Tibial artery (tissue), 4 donors: ENCODE measurements at regions of chr10 and their contacts with region 1.

Region 1: DNA sequence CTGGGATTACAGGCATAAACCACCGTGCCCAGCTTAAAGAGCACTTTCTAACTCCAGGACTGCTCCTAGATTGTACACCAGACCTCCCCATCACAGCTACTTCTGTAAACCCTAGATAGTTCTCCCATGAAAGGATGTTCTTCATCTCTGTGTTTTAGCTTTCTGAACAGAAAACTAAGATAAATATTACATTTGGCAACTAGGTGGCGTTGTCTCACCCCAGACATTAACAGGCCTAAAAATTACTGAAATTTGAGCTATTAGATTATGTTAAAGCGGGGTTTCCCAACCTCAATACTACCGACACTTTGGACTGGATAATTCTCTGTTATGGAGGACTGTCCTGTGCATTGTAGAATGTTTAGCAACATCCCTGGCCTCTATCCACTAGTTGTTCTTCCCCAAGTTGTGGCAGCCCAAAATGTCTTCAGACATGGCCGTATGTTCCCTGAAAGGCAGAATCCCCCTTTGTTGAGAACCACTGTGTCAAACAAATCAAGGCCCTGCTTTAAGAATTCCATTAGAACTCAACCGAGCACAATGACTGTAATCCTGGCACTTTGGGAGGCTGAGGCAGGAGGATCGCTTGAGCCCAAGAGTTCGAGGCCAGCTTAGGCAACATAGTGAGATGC is 19.1 kb downstream of the ATOH7 start:
- DNase-seq: no peak
- H3K4me3 ChIP-seq: no peak overlapping the region
- H3K27ac ChIP-seq: no peak overlapping the region
- H3K4me1 ChIP-seq: no peaks in the 10 kb centered on the region
- H3K27me3 ChIP-seq: peaks cover 0 to 4% of the 10 kb centered on the region in 2 donors
- CTCF ChIP-seq: peak; percentile 52 to 53

Region 2: GRCh38 chr10:68301790-68302502 is 89.1 kb after region 1 on chr10:
- intact Hi-C with region 1: loop called (anchors 10 kb)
- DNase-seq: no peak
- H3K4me3 ChIP-seq: no peak overlapping the region
- H3K27ac ChIP-seq: no peak overlapping the region
- H3K4me1 ChIP-seq: no peaks in the 10 kb centered on the region
- H3K27me3 ChIP-seq: no peaks in the 10 kb centered on the region
- CTCF ChIP-seq: peak; percentile 27 to 44

Region 3: GRCh38 chr10:68315582-68315981 is 102.7 kb after region 1 on chr10:
- intact Hi-C with region 1: no loop called
- DNase-seq: no peak
- H3K4me3 ChIP-seq: no peak overlapping the region
- H3K27ac ChIP-seq: no peak overlapping the region
- H3K4me1 ChIP-seq: no peaks in the 10 kb centered on the region
- H3K27me3 ChIP-seq: no peaks in the 10 kb centered on the region
- CTCF ChIP-seq: no peak